Cardiac septum (tissue), 1 donor: ENCODE measurements at regions of chr11 and their contacts with region 1.

Region 1: DNA sequence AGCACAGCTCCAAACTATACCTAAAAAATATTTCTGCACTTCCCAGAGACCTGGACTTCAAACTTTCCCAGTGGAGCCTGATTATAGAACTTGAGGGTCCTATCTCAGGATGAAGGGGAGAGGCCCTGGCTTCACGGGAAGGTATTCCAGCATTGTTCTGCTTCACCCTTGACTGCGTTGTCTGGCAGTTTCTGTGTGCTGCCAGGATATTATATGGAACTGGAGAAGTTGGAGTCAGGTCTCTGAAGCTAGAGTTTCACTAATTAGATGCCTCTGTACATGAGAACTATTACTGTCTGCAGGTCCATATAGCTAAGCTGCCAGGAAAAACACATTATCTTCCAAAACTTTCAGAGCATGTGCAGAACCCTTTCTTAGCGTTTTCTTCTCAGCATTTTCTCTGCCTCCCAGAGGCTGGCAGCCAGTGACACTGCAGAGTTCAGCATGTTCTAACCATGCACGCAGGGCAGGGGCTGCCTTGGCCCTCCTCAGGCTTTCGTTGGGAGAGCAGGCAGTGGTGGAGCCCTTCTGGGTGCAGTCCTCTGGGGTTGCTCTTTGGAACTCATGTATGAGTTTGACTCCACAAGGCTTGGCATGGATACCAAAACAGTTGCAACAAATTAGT is 99.3 kb downstream of the CWC15 start:
- DNase-seq: no peak

Region 2: GRCh38 chr11:94926698-94927237 is 52.7 kb after region 1 on chr11:
- intact Hi-C with region 1: loop called (anchors 5 kb)
- DNase-seq: peak; percentile 89

Region 3: GRCh38 chr11:94938095-94939055 is 64.3 kb after region 1 on chr11:
- intact Hi-C with region 1: no loop called
- DNase-seq: peak; percentile 89

Region 4: GRCh38 chr11:94958121-94958696 is 84.2 kb after region 1 on chr11:
- intact Hi-C with region 1: no loop called
- DNase-seq: no peak